Panc1 (cell line): ENCODE measurements at regions of chr10 and their contacts with region 1.

Region 1: GRCh38 chr10:32207544-32207943 is 139.4 kb downstream of the EPC1 start:
- DNase-seq: no peak
- ATAC-seq: peak; percentile 60; the same call in 1 of the 2 replicates
- H3K4me3 ChIP-seq: no peak overlapping the region
- H3K27ac ChIP-seq: no peak overlapping the region
- H3K4me1 ChIP-seq: no peaks in the 10 kb centered on the region; the same call in 1 of the 2 replicates
- H3K27me3 ChIP-seq: no peaks in the 10 kb centered on the region
- CTCF ChIP-seq: peak; percentile 72

Region 2: DNA sequence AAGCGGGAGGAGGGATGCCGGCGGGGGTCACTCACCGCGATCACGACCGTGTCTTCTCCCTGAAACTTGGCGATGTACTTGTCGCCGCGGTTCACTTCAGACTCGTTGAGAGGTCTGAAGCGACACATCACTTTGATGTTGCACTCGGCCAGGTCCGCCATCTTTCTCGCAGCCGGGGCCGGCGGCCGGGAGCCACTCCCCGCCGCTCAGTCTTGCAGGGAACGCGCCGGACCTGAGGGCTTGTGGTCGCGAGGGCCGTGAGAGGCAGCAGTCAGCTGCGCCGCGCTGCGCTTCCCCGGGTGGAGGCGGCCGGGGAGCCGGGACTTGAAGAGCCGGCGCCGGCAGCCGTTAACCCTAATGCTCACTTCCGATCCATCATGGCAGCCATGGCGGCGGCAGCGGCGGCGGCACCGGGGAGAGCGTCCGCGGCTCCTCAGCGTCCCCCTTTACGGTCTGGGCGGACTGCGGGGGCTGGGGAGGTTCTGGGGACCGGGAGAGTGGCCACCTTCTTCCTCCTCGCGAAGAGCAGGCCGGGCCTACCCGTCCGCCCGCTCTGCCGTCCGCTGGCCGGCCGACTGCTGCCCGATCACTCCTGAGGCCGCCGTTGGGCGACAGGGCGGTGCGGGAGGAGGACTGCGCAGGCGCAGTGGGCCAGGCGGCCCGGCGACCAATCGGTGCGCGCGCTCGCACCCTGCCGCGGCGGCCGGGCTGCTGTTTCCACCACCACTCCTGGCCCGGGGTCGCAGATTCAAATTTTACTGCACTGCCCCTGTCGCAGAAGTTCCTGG is 151.5 kb before region 1 on chr10 and contains the start of gene KIF5B:
- CTCF ChIA-PET with region 1: no interaction called
- POLR2A ChIA-PET with region 1: interaction called, 4 read pairs
- in situ Hi-C with region 1: no loop called
- intact Hi-C with region 1: loop called (anchors 10 kb)
- DNase-seq: no peak
- ATAC-seq: peak; percentile 96
- H3K4me3 ChIP-seq: peak within 1 kb of the TSS; percentile 83 to 87
- H3K27ac ChIP-seq: peak within 1 kb of the TSS; percentile 98
- H3K4me1 ChIP-seq: peaks cover 27% of the 10 kb centered on the region
- H3K27me3 ChIP-seq: no peaks in the 10 kb centered on the region
- CTCF ChIP-seq: no peak
- total RNA-seq, gene KIF5B: 89.9 TPM

Region 3: DNA sequence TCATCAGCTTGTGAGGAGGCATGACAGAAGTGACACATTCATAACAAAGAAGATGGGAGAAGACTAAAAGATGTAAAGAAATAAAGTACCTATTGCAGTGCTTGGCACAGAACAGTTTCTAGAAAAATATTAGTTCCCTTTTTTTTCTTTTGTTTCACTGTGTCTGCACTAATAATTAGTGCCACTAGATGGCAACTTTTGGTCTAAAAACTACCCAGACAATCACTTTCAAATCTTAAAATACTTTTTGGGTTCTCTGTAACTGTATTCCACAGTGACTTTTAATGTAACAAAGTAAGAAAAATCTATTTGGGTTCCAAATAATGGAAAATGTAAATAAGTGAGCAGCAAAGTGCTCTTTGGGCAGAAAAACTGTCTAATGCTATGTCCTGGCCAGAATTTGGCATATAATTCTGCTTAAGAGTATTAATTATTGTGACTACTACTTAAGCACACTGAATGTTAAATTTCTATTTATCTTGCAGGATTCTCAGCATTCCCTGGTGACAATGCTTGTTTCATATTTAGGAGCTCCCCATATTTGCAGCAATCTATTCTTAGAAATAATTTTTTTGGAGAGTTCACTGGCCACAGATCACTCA is 16.6 kb before region 1 on chr10:
- CTCF ChIA-PET with region 1: no interaction called
- POLR2A ChIA-PET with region 1: no interaction called
- in situ Hi-C with region 1: no loop called
- intact Hi-C with region 1: no loop called
- DNase-seq: no peak
- ATAC-seq: no peak; the same call in 1 of the 2 replicates
- H3K4me3 ChIP-seq: no peak overlapping the region
- H3K27ac ChIP-seq: no peak overlapping the region
- H3K4me1 ChIP-seq: no peaks in the 10 kb centered on the region
- H3K27me3 ChIP-seq: no peaks in the 10 kb centered on the region
- CTCF ChIP-seq: peak; percentile 63; the same call in 1 of the 2 replicates